Stomach (tissue), 19 donors: ENCODE measurements at regions of chr6 and their contacts with region 1.

Region 1: DNA sequence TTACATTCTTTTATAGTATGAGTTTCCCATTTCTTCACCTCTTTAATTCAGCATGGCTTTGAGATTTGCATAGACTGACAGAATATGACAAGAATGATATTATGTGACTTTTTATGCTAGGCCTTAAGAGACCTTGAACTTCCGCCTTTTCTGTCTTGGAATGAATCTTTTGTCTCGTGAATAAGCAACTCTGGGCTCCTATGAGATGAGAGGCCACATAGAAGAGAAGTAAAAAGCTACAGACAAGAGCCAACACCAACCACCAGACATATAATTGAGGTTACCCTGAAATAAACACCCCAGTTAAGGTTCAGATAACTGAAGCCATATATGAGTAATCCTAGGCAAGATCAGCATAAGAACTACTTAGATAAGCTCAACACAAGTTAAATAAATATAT is 600.8 kb downstream of the MEI4 start:
- DNase-seq: no peak
- H3K4me3 ChIP-seq: no peak overlapping the region
- H3K27ac ChIP-seq: no peak overlapping the region
- H3K4me1 ChIP-seq: no peaks in the 10 kb centered on the region
- H3K27me3 ChIP-seq: no peaks in the 10 kb centered on the region
- CTCF ChIP-seq: no peak
- EP300 ChIP-seq: no peak
- POLR2A ChIP-seq: no peak

Region 2: GRCh38 chr6:78324213-78324612 is 70.6 kb after region 1 on chr6:
- intact Hi-C with region 1: loop called (anchors 5 kb)
- DNase-seq: no peak
- H3K4me3 ChIP-seq: no peak overlapping the region
- H3K27ac ChIP-seq: no peak overlapping the region
- H3K4me1 ChIP-seq: no peaks in the 10 kb centered on the region
- H3K27me3 ChIP-seq: no peaks in the 10 kb centered on the region
- CTCF ChIP-seq: no peak
- EP300 ChIP-seq: no peak
- POLR2A ChIP-seq: no peak